PC-9 (cell line): ENCODE measurements at regions of chr12 and their contacts with region 1.

Region 1: DNA sequence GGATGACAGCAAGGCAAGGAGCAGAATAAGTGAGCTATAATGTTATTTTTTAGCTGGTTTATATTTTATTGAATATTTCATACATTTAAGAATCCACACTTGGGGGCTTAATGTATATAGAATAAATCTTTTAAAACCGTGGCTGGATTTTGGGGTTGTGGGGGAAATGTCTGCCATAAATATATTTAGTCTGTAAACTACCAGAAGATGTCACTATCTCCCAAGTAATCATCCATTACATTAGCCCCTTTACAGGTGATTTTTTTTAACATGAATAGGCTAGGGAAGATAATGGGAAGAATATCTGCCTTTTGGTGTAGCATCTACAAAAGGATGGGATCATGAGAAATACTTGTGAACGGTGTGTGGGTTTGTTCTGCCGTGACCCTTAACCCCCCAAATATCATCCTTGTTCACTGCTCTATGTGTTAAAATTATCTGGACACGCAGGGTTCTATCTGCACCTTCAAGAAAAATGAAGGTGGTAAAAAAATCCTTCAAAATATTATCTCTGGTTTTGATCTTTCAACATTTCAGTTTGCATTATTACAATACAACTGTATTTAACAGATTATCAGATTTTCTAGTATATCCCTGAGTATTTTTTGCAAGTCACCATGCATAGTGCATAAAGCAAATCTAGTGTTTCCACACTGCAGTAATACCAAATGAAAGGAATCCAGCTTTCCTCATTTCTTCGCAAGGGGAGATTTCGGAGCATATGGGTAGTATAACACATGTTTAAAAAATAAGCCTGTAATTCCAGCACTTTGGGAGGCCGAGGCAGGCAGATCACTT is 8.0 kb upstream of the SLC17A8 start:
- DNase-seq: no peak
- H3K4me3 ChIP-seq: no peak overlapping the region
- H3K27ac ChIP-seq: no peak overlapping the region
- H3K4me1 ChIP-seq: no peaks in the 10 kb centered on the region
- H3K27me3 ChIP-seq: peaks cover 9% of the 10 kb centered on the region
- CTCF ChIP-seq: peak; percentile 65

Region 2: DNA sequence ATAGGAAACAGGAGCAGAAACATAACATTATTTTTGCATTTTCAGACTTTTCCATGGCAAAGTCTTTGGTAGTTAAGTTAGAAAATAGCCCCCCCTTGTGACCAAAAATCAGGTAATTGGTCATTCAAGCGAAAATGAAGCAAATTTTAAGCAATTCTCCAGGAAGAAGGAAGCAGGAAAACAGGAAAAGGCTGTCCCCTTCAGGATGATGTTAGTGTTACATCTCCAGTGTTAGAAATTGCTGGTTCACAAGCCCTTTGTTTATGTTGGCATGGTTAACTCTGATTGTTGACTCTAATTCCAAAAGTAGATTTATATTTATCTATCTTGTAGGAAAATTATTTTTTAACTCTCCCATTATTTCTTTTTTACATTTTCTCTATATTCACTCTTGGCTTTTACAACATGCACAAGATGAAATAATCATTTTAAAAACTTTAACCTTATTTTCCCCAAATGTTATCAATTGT is 205.8 kb after region 1 on chr12:
- CTCF ChIA-PET with region 1: no interaction called
- POLR2A ChIA-PET with region 1: no interaction called
- intact Hi-C with region 1: loop called (anchors 2 kb)
- DNase-seq: peak; percentile 25 to 69
- H3K4me3 ChIP-seq: no peak overlapping the region
- H3K27ac ChIP-seq: no peak overlapping the region
- H3K4me1 ChIP-seq: no peaks in the 10 kb centered on the region
- H3K27me3 ChIP-seq: peaks cover 13% of the 10 kb centered on the region; the same call in 1 of the 2 replicates
- CTCF ChIP-seq: peak; percentile 75

Region 3: DNA sequence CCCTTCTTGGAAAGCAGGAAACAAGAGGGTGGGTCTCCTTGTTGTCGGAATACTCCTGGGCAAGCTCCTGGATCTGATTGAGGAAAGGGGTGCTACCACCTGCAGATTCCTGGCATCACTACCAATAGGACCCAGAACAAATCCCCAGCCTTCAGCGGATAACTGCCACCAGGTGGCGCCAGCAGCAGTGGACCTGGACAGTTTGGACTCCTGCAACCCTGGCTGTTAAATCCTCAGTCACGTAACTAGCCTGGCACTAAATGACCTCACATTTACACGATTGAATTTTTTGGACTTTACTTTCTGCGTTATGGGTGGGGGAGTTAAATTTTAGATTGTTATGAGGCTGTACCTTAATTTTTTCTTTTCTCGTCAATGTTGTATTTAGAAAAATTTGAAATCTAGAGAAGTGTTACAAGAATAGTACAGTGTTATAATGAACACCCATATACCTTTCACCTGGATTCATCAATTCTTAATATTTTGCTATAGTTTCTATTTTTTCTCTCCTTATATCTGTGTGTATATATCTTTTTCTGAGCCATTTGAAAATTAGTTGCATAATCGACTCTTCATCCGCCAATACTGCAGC is 320.2 kb after region 1 on chr12:
- CTCF ChIA-PET with region 1: no interaction called
- POLR2A ChIA-PET with region 1: no interaction called
- intact Hi-C with region 1: loop called (anchors 5 kb)
- DNase-seq: peak; percentile 43 to 53
- H3K4me3 ChIP-seq: no peak overlapping the region
- H3K27ac ChIP-seq: no peak overlapping the region
- H3K4me1 ChIP-seq: no peaks in the 10 kb centered on the region
- H3K27me3 ChIP-seq: peaks cover 58% of the 10 kb centered on the region
- CTCF ChIP-seq: peak; percentile 86

Region 4: GRCh38 chr12:100741084-100741711 is 392.3 kb after region 1 on chr12:
- CTCF ChIA-PET with region 1: no interaction called
- POLR2A ChIA-PET with region 1: no interaction called
- intact Hi-C with region 1: loop called (anchors 2 kb)
- DNase-seq: no peak
- H3K4me3 ChIP-seq: no peak overlapping the region
- H3K27ac ChIP-seq: no peak overlapping the region
- H3K4me1 ChIP-seq: no peaks in the 10 kb centered on the region
- H3K27me3 ChIP-seq: no peaks in the 10 kb centered on the region
- CTCF ChIP-seq: peak; percentile 81

Region 5: GRCh38 chr12:100767950-100768349 is 419.1 kb after region 1 on chr12:
- CTCF ChIA-PET with region 1: no interaction called
- POLR2A ChIA-PET with region 1: no interaction called
- intact Hi-C with region 1: no loop called
- DNase-seq: no peak
- H3K4me3 ChIP-seq: no peak overlapping the region
- H3K27ac ChIP-seq: no peak overlapping the region
- H3K4me1 ChIP-seq: no peaks in the 10 kb centered on the region
- H3K27me3 ChIP-seq: no peaks in the 10 kb centered on the region
- CTCF ChIP-seq: no peak

Region 6: DNA sequence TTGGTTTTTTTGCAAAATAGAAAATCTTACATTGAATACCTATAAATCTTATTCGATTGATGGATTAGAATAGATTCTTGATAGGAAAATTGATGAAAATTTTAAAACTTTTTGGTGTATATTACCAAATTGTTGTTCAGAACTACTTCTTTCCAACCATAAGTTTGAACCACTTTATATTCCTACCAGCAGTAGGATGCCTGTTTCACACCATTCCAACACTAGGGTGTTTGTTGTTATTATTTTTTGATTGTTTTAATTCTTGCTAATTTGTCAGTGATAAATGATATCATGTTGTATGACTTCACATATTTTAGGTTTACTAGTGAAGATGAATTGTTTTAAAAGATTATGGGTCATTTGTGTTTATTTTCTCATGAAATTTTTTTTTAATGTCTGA is 974.4 kb after region 1 on chr12:
- CTCF ChIA-PET with region 1: no interaction called
- POLR2A ChIA-PET with region 1: no interaction called
- intact Hi-C with region 1: loop called (anchors 10 kb)
- DNase-seq: no peak
- H3K4me3 ChIP-seq: no peak overlapping the region
- H3K27ac ChIP-seq: no peak overlapping the region
- H3K4me1 ChIP-seq: no peaks in the 10 kb centered on the region
- H3K27me3 ChIP-seq: no peaks in the 10 kb centered on the region
- CTCF ChIP-seq: no peak